A549 (cell line): ENCODE measurements at regions of chr6 and their contacts with region 1.

Region 1: GRCh38 chr6:10694302-10695085 is at the starts of genes C6orf52 and PAK1IP1:
- DNase-seq: peak; percentile 88 to 91
- ATAC-seq: peak; percentile 99 to 100
- H3K4me3 ChIP-seq: peak within 1 kb of the TSS; percentile 69
- H3K27ac ChIP-seq: peak within 1 kb of the TSS; percentile 86 to 95
- H3K4me1 ChIP-seq: peaks cover 16% of the 10 kb centered on the region
- CTCF ChIP-seq: no peak
- EP300 ChIP-seq: no peak
- POLR2A ChIP-seq: peak; percentile 89
- RAD21 ChIP-seq: 0 out of 5 replicates have a peak, but pooled peaks of 1 of the 2 experiments have one; percentile 11
- polyA plus RNA-seq, gene C6orf52: 2.2 and 3.2 TPM in 2 replicates
- polyA plus RNA-seq, gene PAK1IP1: 26.8 and 33.4 TPM in 2 replicates

Region 2: GRCh38 chr6:10521104-10521808 is 173.2 kb before region 1 on chr6 and contains the start of gene GCNT2:
- CTCF ChIA-PET with region 1: interaction called, 5 read pairs
- POLR2A ChIA-PET with region 1: interaction called, 10 read pairs
- DNase-seq: peak; percentile 46 to 90
- ATAC-seq: peak; percentile 88 to 93
- H3K4me3 ChIP-seq: peak within 1 kb of the TSS; percentile 34
- H3K27ac ChIP-seq: peak within 1 kb of the TSS; percentile 92
- H3K4me1 ChIP-seq: peaks cover 46% of the 10 kb centered on the region
- CTCF ChIP-seq: no peak
- EP300 ChIP-seq: no peak
- POLR2A ChIP-seq: peak; percentile 43
- RAD21 ChIP-seq: no peak
- polyA plus RNA-seq, gene GCNT2: 22.9 and 24.3 TPM in 2 replicates

Region 3: GRCh38 chr6:10585209-10585845 is 109.2 kb before region 1 on chr6:
- CTCF ChIA-PET with region 1: no interaction called
- POLR2A ChIA-PET with region 1: no interaction called
- DNase-seq: no peak
- ATAC-seq: no peak
- H3K4me3 ChIP-seq: no peak overlapping the region
- H3K27ac ChIP-seq: no peak overlapping the region
- H3K4me1 ChIP-seq: no peaks in the 10 kb centered on the region
- CTCF ChIP-seq: no peak
- EP300 ChIP-seq: no peak
- POLR2A ChIP-seq: no peak
- RAD21 ChIP-seq: no peak